ENCODE measurements at regions of chr20 and their contacts with region 1.

Region 1: GRCh38 chr20:17968366-17969279 is at the starts of genes MGME1 and SNX5:
- DNase-seq: peak; percentile 100
- H3K4me3 Mint-ChIP-seq: peak within 1 kb of the TSS; percentile 97
- H3K27ac Mint-ChIP-seq: peak within 1 kb of the TSS; percentile 98
- H3K4me1 Mint-ChIP-seq: peaks cover 34% of the 10 kb centered on the region
- H3K27me3 Mint-ChIP-seq: no peaks in the 10 kb centered on the region
- total RNA-seq, gene MGME1: 53.9 to 56.7 TPM
- total RNA-seq, gene SNX5: 236 to 250 TPM

Region 2: GRCh38 chr20:17530716-17531664 is 437.6 kb before region 1 on chr20 and contains the start of gene BFSP1:
- CTCF ChIA-PET with region 1: interaction called, 3 read pairs
- POLR2A ChIA-PET with region 1: interaction called, 19 read pairs
- DNase-seq: peak; percentile 75
- H3K4me3 Mint-ChIP-seq: peak within 1 kb of the TSS; percentile 95
- H3K27ac Mint-ChIP-seq: peak within 1 kb of the TSS; percentile 94
- H3K4me1 Mint-ChIP-seq: peaks cover 33% of the 10 kb centered on the region
- H3K27me3 Mint-ChIP-seq: no peaks in the 10 kb centered on the region
- total RNA-seq, gene BFSP1: 2.7 to 3.2 TPM

Region 3: GRCh38 chr20:17863461-17864292 is 104.9 kb before region 1 on chr20:
- CTCF ChIA-PET with region 1: no interaction called
- POLR2A ChIA-PET with region 1: no interaction called
- DNase-seq: no peak
- H3K4me3 Mint-ChIP-seq: no peak overlapping the region
- H3K27ac Mint-ChIP-seq: no peak overlapping the region
- H3K4me1 Mint-ChIP-seq: peaks cover 18% of the 10 kb centered on the region
- H3K27me3 Mint-ChIP-seq: peaks cover 38% of the 10 kb centered on the region

Region 4: DNA sequence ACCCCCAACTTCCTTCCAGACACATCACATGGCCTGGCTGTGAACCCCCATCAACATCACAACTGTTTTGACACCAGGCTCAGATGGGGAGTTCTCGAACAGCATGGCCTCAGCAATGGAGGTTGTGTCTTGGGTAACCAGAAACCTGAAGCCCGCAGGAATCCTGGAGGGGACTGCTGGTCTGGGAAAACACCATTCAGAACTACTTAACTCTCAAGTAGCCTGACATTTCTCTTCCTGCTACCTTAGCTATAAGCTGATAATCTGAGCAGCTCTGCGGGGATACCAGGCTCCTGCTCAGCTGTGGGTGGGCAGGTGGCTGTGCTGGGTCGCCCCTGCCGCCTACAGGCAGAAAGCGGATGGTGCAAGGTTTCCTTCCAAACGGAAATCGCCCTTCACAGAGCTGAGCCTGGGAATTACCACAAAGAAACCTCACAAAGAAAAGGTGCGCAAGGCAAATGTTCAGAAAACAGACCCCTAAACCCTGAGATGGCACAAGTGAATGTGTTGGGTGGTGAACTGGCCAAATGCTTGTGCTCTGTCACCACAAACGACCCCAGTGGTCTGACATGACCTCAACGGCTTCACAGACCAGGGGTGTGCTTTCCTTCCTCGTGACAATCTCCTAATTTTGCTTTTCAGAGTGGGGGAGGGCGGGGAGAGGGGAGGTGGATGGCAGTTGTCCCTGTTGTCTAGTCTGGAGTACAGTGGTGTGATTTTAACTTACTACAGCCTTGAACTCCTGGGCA is 29.6 kb before region 1 on chr20:
- CTCF ChIA-PET with region 1: interaction called, 12 read pairs
- POLR2A ChIA-PET with region 1: interaction called, 303 read pairs
- DNase-seq: peak; percentile 68
- H3K4me3 Mint-ChIP-seq: no peak overlapping the region
- H3K27ac Mint-ChIP-seq: no peak overlapping the region
- H3K4me1 Mint-ChIP-seq: peaks cover 24% of the 10 kb centered on the region
- H3K27me3 Mint-ChIP-seq: no peaks in the 10 kb centered on the region

Region 5: DNA sequence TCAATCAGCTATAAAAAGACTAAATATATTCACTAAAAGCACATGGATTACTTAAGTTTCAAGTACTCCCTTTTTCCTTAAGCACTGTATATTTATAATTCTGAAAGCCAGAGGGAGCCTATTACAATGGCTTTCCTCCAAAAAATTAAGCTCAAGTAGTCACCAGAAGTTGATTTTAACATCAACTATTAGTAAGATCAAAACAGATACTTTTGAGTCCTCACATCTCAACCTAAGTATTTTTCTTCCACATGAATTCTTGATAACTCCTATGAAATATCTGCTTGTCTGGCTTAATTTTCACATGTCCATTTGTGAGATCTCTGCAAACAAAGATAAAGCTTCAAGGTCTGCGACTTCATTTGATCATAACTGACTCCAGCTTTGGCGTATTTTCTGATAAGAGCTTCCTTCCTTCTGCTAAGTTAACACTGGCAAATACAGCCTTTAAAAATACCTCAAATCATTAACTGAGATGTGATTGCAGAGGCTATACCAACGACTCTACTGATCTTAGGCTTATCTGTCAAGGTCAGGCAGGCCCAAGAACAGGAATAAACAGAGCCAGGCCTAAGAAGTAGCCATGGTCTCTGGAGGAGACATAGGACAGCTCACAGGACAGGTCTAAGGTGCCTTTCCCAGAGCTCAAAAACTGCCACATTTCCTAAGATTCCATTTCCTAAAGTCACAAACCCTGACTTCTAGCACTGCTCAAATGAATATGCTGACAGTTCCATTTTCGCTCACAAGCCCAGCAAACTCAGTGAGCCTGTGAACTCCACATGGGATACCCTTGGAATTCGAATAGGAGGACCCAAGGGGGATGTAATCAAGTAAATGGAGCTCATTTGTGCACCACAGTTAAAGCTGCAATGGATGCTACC is 10.0 kb before region 1 on chr20:
- CTCF ChIA-PET with region 1: interaction called, 13 read pairs
- POLR2A ChIA-PET with region 1: interaction called, 353 read pairs
- DNase-seq: no peak
- H3K4me3 Mint-ChIP-seq: no peak overlapping the region
- H3K27ac Mint-ChIP-seq: peak overlapping the region; percentile 83
- H3K4me1 Mint-ChIP-seq: peaks cover 94% of the 10 kb centered on the region
- H3K27me3 Mint-ChIP-seq: no peaks in the 10 kb centered on the region

Region 6: GRCh38 chr20:17995967-17996819 is 27.6 kb after region 1 on chr20:
- CTCF ChIA-PET with region 1: interaction called, 13 read pairs
- POLR2A ChIA-PET with region 1: interaction called, 353 read pairs
- DNase-seq: peak; percentile 48
- H3K4me3 Mint-ChIP-seq: no peak overlapping the region
- H3K27ac Mint-ChIP-seq: no peak overlapping the region
- H3K4me1 Mint-ChIP-seq: peaks cover 47% of the 10 kb centered on the region
- H3K27me3 Mint-ChIP-seq: peaks cover 5% of the 10 kb centered on the region

Measured in activated CD4-positive, alpha-beta memory T cell treated with anti-CD3 and anti-CD28 coated beads, Interleukin-2, amount 10 ng/mL, durations not matched to agents 7 days and 5 days (primary cell).